Activated T-helper 1 cell treated with anti-CD3 and anti-CD28 coated beads, Interleukin-12 subunit alpha, Interleukin-12 subunit beta, Interleukin-2, Interleukin-4 antibody, amounts not matched to agents 30 ng/mL and 10 ng/mL and 1 ng/mL, durations not matched to agents 14 hours and 24 hours and 36 hours (primary cell): ENCODE measurements at regions of chr15 and their contacts with region 1.

Region 1: GRCh38 chr15:79853458-79854328 is 43.1 kb downstream of the MTHFS start:
- DNase-seq: peak; percentile 43
- H3K4me3 Mint-ChIP-seq: no peak overlapping the region
- H3K27ac Mint-ChIP-seq: no peak overlapping the region
- H3K4me1 Mint-ChIP-seq: peaks cover 17% of the 10 kb centered on the region
- H3K27me3 Mint-ChIP-seq: no peaks in the 10 kb centered on the region

Region 2: GRCh38 chr15:79339564-79340314 is 514.0 kb before region 1 on chr15:
- intact Hi-C with region 1: loop called (anchors 1 kb)
- DNase-seq: no peak
- H3K4me3 Mint-ChIP-seq: no peak overlapping the region
- H3K27ac Mint-ChIP-seq: no peak overlapping the region
- H3K4me1 Mint-ChIP-seq: no peaks in the 10 kb centered on the region
- H3K27me3 Mint-ChIP-seq: no peaks in the 10 kb centered on the region

Region 3: DNA sequence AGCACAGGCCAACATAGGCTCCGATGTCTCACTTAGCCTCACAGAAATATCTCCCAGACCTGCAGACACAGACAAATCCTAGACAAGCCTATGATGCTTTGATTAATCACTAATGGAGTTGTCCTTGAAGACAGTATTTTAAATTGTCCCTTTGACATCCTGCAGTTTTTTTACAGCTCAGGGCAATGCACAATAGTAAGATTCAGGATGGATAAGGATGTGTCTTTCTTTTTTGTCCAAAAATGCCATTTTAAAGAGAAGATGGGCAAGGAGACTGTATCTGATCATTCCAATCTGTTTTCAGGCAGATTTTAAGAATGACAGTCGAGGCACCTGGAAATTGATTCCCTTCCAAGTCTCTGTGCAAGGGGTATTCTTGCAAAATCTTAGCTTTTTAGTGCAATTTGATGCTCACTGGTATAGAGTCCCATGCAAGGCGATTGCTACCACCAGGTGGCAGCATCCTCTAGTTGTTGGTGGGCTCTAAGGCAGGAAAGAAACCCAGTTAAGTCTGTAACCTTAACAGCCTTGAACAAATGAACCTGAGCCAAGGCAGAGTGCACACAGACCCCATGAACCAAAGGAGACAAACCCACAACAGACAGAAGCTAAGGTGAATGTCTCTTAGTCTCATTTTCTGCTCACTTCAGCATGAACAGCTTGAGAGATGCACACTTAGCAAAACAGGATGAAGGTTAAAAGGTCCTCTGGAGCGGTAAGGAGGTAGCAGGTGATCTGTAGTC is 472.8 kb before region 1 on chr15:
- intact Hi-C with region 1: loop called (anchors 1 kb)
- DNase-seq: peak; percentile 50
- H3K4me3 Mint-ChIP-seq: no peak overlapping the region
- H3K27ac Mint-ChIP-seq: no peak overlapping the region
- H3K4me1 Mint-ChIP-seq: no peaks in the 10 kb centered on the region
- H3K27me3 Mint-ChIP-seq: no peaks in the 10 kb centered on the region

Region 4: GRCh38 chr15:79608066-79608864 is 245.4 kb before region 1 on chr15:
- intact Hi-C with region 1: loop called (anchors 10 kb)
- DNase-seq: no peak
- H3K4me3 Mint-ChIP-seq: no peak overlapping the region
- H3K27ac Mint-ChIP-seq: no peak overlapping the region
- H3K4me1 Mint-ChIP-seq: no peaks in the 10 kb centered on the region
- H3K27me3 Mint-ChIP-seq: peaks cover 9% of the 10 kb centered on the region

Region 5: DNA sequence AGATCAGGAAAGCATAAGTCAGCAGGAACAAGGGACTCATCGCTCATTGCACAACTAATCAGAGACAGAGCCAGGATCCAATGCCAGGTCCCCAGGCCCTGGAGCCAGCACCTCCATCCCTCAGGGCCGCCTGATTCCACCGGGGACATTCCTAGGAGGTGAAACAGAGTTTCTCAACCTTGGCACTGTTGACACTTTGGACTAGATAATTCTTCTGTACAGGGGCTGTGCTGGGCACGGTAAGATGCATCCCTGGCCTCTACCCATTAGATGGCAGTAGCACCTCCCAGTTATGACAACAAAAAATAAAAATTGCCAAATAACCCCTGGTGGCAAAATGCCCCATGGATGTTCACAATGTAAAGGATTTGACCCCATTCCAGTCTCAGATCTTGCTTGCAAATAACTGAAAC is 84.6 kb before region 1 on chr15:
- intact Hi-C with region 1: loop called (anchors 2 kb)
- DNase-seq: no peak
- H3K4me3 Mint-ChIP-seq: no peak overlapping the region
- H3K27ac Mint-ChIP-seq: no peak overlapping the region
- H3K4me1 Mint-ChIP-seq: no peaks in the 10 kb centered on the region
- H3K27me3 Mint-ChIP-seq: peaks cover 15% of the 10 kb centered on the region

Region 6: DNA sequence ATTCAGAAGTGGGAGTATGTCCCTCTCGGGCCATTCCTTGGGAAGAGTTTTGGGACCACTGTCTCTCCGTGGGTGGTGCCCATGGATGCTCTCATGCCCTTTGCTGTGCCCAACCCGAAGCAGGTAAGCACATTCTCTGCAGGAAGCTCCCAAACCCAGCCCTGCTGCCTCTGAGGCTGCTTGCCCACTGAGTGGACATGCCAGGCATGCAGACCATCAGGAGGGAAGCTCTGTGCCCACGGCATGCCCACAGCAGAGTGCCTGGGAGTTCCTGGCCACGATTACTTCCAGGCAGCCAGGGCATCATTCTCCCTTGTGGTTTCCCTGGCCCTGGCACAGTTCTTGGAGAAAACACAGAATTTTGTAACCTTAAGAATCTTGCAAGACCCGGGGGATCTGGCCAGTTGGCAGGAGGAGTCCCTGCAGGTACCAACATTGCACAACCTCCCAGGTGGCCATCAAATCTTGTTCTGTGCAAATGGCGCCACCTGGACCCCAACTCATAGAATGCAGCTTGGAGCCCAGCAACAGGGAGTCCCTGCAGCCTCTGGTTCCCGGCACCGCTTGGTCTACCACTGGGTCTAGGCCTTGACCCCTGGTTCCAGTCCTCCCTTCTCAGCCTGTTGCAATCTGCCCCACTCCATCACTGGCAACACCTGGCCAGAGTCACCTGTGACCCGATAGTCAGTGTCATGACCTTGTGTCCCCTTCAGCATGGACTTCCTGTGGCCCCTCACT is 319.5 kb after region 1 on chr15:
- intact Hi-C with region 1: loop called (anchors 1 kb)
- DNase-seq: peak; percentile 57
- H3K4me3 Mint-ChIP-seq: no peak overlapping the region
- H3K27ac Mint-ChIP-seq: no peak overlapping the region
- H3K4me1 Mint-ChIP-seq: peaks cover 5% of the 10 kb centered on the region
- H3K27me3 Mint-ChIP-seq: no peaks in the 10 kb centered on the region